ENCODE measurements at regions of chr15 and their contacts with region 1.

Region 1: GRCh38 chr15:51576911-51577500 is 45.6 kb downstream of the DMXL2 start:
- DNase-seq: no peak
- H3K4me3 ChIP-seq: no peak overlapping the region
- H3K27ac ChIP-seq: no peak overlapping the region
- H3K4me1 ChIP-seq: no peaks in the 10 kb centered on the region
- CTCF ChIP-seq: no peak

Region 2: DNA sequence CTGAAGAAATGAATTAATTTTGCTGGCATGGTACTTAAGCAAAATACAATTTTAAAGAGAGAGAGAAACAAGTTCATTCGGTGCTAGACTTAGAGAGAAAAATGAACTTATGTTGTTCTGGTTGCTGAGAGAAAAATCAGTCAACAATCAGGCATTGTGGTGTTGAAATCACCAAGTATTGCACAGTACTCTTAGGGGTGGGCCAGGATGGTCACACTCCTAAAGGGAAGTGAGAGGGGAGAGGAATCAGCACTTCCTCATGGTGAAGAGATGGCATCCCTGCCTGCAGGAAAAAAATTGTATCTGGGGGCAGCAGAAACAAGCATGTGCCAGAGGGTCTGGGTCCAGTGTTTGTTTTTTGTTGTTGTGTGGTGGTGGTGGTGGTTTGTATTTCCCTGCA is 52.6 kb after region 1 on chr15:
- CTCF ChIA-PET with region 1: no interaction called
- POLR2A ChIA-PET with region 1: no interaction called
- intact Hi-C with region 1: loop called (anchors 10 kb)
- DNase-seq: no peak
- H3K4me3 ChIP-seq: no peak overlapping the region
- H3K27ac ChIP-seq: no peak overlapping the region
- H3K4me1 ChIP-seq: no peaks in the 10 kb centered on the region
- CTCF ChIP-seq: no peak

Measured in OCI-LY7 (cell line).